HepG2 (cell line): ENCODE measurements at regions of chr19 and their contacts with region 1.

Region 1: DNA sequence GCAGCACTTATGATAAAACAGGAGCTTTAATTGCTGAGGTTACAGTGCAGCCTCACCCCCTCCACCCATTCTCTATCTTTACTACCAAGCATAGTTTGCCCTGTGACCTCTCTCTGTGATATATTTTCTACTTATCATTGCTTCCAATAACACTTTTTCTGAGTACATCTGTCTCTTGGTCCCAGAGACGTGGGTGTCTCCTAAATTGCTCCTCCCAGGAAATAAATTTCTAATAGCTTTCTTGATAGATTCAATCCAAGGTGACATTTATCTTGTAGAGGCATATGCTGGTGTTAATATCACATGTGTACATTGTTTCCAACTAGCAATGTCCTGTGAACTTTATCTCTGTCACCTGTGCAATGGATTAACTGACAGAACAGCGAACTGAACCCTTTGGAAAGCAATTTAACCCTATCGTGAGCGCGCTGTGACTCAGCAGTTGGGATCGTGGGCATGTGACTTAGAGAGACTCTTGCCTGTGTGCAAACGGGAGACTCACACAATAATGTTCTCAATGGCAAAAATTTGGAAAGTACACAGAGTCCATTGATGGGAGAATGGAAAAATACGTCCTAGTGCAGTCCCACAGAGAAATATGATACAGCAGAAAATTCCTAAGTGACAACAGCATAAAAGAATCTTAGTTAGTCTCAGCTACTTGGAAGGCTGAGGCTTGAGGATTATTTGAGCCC is 7.0 kb upstream of the MAP2K2 start:
- DNase-seq: peak; percentile 93
- ATAC-seq: peak; percentile 79
- H3K4me3 ChIP-seq: peak overlapping the region in 2 of 3 experiments; percentile 27 to 29; a peak in 2 of 6 replicates
- H3K27ac ChIP-seq: peak overlapping the region; percentile 72
- H3K4me1 ChIP-seq: peaks cover 41% of the 10 kb centered on the region
- H3K27me3 ChIP-seq: no peaks in the 10 kb centered on the region
- CTCF ChIP-seq: no peak
- EP300 ChIP-seq: peak in 1 of 2 experiments; percentile 78; a peak in 2 of 4 replicates
- POLR2A ChIP-seq: no peak
- RAD21 ChIP-seq: no peak; the same call in 1 of the 2 replicates

Region 2: DNA sequence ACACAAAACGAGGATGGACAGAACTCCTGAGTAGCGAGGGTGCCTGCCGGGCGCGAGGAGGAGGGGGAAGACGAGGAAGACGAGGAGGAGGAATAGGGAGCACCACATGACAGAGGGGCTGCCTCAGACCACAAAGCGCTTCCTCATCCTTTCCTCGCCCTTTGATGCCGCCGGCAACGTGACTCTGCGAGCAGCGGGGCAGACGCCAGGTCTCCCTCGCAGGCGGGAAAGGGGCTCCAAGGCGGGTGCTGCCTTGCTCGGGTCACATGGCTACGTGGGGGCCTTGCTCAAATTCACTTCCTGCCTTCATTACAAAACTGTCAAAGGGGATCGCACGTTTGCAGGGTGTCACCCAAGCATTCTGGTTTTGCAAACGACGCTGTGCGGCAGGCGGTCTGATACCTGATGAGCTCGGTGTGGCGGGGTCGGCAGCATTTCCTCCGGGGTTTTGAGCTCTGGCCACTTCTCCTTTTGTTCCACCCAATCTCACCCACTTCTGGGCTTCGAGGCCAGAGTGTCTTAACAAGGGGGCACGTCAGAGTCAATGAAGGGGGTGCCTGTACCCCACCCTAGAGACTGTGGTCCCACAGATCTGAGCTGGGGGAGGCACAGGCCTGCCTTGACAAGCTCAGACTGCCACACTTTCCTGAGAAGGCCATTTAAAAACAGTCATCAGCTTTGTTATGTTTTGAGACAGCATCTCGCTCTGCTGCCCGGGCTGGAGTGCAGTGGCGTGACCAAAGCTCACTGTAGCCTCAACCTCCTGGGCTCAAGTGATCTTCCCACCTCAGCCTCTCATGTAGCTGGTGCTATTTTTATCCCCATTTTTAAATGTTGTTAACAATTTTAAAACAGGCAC is 21.9 kb before region 1 on chr19:
- CTCF ChIA-PET with region 1: no interaction called
- POLR2A ChIA-PET with region 1: no interaction called
- in situ Hi-C with region 1: no loop called
- intact Hi-C with region 1: no loop called
- DNase-seq: no peak
- ATAC-seq: no peak
- H3K4me3 ChIP-seq: no peak overlapping the region
- H3K27ac ChIP-seq: no peak overlapping the region
- H3K4me1 ChIP-seq: no peaks in the 10 kb centered on the region
- H3K27me3 ChIP-seq: no peaks in the 10 kb centered on the region
- CTCF ChIP-seq: no peak
- EP300 ChIP-seq: no peak
- POLR2A ChIP-seq: no peak
- RAD21 ChIP-seq: no peak

Region 3: DNA sequence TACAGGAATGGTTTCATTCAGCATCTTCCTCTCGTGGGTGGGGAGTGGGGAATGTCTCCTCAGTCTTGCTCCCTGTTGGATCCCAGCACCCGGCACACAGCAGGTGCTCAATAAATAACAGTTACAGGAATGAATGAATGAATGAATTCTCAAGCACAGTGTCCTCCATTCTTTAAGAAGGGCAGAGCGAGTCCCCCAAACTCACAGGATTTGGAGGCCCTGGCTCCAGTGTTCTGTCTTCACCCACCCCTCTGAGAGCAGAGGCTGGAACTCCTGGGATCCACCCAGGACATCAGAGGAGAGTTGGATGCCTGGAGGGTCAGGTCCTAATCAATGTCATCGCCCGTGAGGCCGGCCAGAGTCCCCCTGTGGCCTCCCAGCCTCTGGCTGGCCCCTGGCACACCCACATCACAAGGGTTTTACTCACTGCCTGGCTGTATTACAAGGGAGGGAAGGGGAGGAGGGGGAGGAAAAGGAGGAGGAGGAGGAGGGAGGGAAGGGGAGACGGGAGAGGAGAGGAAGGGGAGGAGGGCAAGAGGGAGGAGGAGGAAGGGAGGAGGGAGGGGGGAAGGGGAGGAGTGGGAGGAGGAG is 13.9 kb after region 1 on chr19:
- CTCF ChIA-PET with region 1: no interaction called
- POLR2A ChIA-PET with region 1: interaction called, 3 read pairs
- in situ Hi-C with region 1: no loop called
- intact Hi-C with region 1: loop called (anchors 2 kb)
- DNase-seq: no peak
- ATAC-seq: no peak
- H3K4me3 ChIP-seq: no peak overlapping the region
- H3K27ac ChIP-seq: no peak overlapping the region
- H3K4me1 ChIP-seq: peaks cover 77% of the 10 kb centered on the region
- H3K27me3 ChIP-seq: no peaks in the 10 kb centered on the region; a peak in 1 of 5 replicates
- CTCF ChIP-seq: no peak
- EP300 ChIP-seq: 0 out of 4 replicates have a peak, but pooled peaks of 1 of the 2 experiments have one; percentile 25
- POLR2A ChIP-seq: no peak
- RAD21 ChIP-seq: no peak